ENCODE measurements at regions of chr17 and their contacts with region 1.

Region 1: DNA sequence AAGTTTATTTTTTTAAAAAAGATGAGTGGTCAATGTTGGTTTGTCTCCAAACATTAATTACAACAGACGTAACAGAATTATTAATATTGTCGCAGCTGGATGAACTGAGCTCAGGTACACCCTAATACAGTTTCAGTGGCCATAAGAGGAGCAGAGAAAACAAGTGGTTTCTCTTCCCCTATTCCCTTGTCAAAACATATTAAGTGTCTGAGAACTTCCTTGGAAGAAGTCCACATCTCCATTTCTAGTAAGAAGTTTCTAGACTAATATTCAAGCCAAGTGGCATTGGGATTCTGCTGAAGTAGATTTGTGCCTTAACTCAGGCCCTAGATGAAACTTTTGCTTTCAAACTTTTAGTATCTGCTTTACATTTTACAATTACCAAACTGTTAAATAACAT is 47.7 kb downstream of the GNA13 start:
- DNase-seq: no peak
- ATAC-seq: peak; percentile 38; the same call in 1 of the 3 replicates
- H3K4me3 ChIP-seq: no peak overlapping the region
- H3K27ac ChIP-seq: peak overlapping the region; percentile 13; the same call in 1 of the 2 replicates
- H3K4me1 ChIP-seq: peaks cover 37% of the 10 kb centered on the region
- H3K27me3 ChIP-seq: no peaks in the 10 kb centered on the region
- CTCF ChIP-seq: no peak
- EP300 ChIP-seq: no peak
- POLR2A ChIP-seq: no peak
- RAD21 ChIP-seq: no peak

Region 2: GRCh38 chr17:65020313-65020712 is 11.4 kb after region 1 on chr17:
- CTCF ChIA-PET with region 1: interaction called, 5 read pairs
- POLR2A ChIA-PET with region 1: interaction called, 5 read pairs
- RAD21 ChIA-PET with region 1: interaction called, 4 read pairs
- SMC1A ChIA-PET with region 1: interaction called, 26 read pairs
- in situ Hi-C with region 1: no loop called
- intact Hi-C with region 1: no loop called
- DNase-seq: no peak
- ATAC-seq: no peak
- H3K4me3 ChIP-seq: no peak overlapping the region
- H3K27ac ChIP-seq: peak overlapping the region; percentile 6; the same call in 1 of the 2 replicates
- H3K4me1 ChIP-seq: peaks cover 32% of the 10 kb centered on the region
- H3K27me3 ChIP-seq: no peaks in the 10 kb centered on the region
- CTCF ChIP-seq: no peak
- EP300 ChIP-seq: no peak
- POLR2A ChIP-seq: no peak
- RAD21 ChIP-seq: no peak

Region 3: DNA sequence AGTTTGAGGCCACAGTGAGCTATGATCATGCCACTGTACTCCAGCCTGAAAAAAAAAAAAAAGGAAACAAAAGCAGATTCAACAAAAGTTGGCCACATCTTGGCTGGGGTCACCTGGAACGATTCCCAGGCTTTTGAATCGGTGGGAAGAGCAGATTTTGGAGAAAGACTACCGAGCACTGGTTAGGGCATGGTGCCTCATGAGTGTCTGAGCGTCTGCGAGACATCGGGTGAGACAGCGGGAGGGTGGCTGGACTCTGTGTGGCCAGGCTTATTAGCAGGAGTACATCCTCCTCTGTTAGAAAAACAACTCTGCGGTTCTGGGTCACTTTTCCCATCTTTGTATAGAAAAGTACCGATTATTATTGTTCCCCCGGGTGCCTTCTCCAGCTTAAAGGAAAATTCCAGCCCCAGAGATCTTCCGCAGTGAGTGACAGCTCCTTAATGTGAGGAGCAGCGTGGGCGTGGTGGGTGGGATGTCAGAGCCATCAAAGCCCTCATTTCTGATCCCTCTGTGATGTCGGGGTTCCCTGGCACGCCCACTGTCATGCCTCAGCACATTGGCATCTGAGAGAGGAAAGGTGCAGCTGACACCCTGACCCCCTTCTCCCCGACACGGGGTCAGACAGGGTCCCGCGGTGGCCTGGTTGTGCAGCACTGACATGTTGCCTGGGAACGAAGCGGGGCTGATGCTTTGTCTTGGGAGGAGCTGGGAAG is 135.2 kb after region 1 on chr17:
- CTCF ChIA-PET with region 1: no interaction called
- POLR2A ChIA-PET with region 1: no interaction called
- RAD21 ChIA-PET with region 1: no interaction called
- SMC1A ChIA-PET with region 1: no interaction called
- in situ Hi-C with region 1: no loop called
- intact Hi-C with region 1: no loop called
- DNase-seq: no peak
- ATAC-seq: no peak
- H3K4me3 ChIP-seq: no peak overlapping the region
- H3K27ac ChIP-seq: no peak overlapping the region
- H3K4me1 ChIP-seq: peaks cover 12% of the 10 kb centered on the region
- H3K27me3 ChIP-seq: no peaks in the 10 kb centered on the region
- CTCF ChIP-seq: no peak
- EP300 ChIP-seq: no peak
- POLR2A ChIP-seq: no peak
- RAD21 ChIP-seq: no peak

Measured in GM12878 (cell line).